ENCODE measurements at regions of chr6 and their contacts with region 1.

Region 1: DNA sequence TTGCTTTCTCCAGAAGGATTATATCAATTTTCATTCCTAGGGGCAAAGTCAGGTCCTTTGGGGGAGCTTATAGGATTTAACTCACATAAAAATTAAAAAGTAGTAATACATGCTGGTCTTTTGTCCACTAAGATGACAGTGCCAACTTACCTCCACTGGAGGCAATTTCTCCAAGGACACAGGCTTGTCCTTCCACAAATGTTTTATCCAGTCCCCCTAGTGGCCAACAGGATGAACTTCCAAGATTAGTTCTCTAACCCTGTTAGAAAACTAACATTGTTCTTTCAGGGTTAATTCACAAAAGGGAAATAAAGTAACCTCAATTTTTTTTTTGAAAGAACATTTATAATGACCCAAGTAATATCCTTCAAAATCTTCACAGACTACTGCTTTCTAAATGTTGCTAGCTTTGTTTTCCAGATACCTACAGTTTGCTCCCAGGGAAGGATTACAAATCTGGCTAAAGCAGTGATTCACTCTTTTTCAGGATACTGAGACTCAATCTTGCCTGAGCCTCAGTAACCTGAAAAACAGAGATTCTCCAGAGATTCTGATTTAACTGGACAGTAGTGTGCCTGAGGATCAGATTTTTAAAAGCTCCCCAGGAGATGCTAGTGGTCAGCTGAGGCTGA is 31.7 kb upstream of the UBR2 start:
- DNase-seq: peak in 4 of 9 experiments; percentile 14 to 72 (median 36)
- ATAC-seq: no peak
- H3K4me3 ChIP-seq: no peak overlapping the region
- H3K4me3 Mint-ChIP-seq: no peak overlapping the region
- H3K27ac ChIP-seq: no peak overlapping the region
- H3K27ac Mint-ChIP-seq: no peak overlapping the region
- H3K4me1 ChIP-seq: no peaks in the 10 kb centered on the region
- H3K4me1 Mint-ChIP-seq: no peaks in the 10 kb centered on the region
- H3K27me3 ChIP-seq: no peaks in the 10 kb centered on the region
- H3K27me3 Mint-ChIP-seq: no peaks in the 10 kb centered on the region
- CTCF ChIP-seq: peak; percentile 80

Region 2: DNA sequence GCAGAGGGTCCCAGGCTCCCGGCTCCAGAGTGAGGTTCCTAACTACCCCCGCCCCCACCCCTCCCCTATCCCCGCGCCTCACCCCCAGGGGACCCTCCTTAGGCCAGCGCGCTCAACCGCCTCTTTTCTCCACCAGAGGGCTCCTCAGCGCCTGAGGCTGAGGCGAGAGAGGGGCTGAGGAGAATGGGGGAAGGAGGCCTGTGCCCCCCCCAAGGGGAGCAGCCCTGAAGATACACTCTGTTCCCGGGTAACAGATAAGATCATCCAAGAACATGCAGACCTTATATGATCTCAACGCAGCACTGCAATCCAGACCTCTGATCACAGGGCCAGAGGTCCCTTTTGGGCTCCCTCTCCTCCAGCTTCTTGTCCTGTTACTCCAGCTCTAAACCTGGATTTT is 271.2 kb before region 1 on chr6:
- CTCF ChIA-PET with region 1: interaction called, 19 read pairs
- POLR2A ChIA-PET with region 1: no interaction called
- intact Hi-C with region 1: loop called (anchors 1 kb)
- DNase-seq: peak in 6 of 9 experiments; percentile 35 to 70 (median 53)
- ATAC-seq: peak; percentile 81
- H3K4me3 ChIP-seq: no peak overlapping the region
- H3K4me3 Mint-ChIP-seq: no peak overlapping the region
- H3K27ac ChIP-seq: no peak overlapping the region
- H3K27ac Mint-ChIP-seq: peak overlapping the region; percentile 45
- H3K4me1 ChIP-seq: peaks cover 3% of the 10 kb centered on the region
- H3K4me1 Mint-ChIP-seq: peaks cover 12% of the 10 kb centered on the region
- H3K27me3 ChIP-seq: no peaks in the 10 kb centered on the region
- H3K27me3 Mint-ChIP-seq: no peaks in the 10 kb centered on the region
- CTCF ChIP-seq: peak; percentile 49

Region 3: DNA sequence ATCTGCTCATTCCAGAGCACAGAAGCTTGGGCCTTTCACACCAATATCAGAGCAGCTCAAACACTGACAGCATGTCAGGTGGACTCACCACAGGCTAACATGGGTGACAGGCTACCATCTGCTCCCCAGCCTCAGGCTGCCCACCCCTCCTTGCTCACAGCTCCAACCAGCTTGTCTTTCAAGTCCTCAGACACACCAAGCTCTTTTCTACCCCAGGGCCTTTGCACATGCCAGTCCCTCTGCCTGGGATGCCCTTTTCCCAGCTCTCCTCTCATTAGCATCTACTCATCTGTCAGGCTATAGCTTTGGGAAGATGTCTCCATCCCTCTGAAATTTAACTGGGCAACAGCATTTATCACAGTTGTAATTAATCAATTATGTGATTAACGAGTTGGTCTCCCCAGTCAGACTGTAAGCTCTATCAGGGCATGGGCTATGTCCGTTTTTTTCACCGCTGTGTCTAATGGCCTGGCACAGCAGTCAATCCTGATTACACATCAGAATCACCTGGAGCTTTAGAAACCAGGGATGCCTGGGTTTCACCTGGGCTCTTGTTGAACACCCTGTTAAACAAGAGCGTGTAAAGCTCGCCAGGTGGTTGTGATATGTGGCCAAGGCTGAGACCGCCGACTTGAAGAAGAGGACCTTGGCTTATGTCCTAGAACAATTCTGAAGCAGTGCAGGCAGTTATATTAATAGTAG is 225.6 kb before region 1 on chr6:
- CTCF ChIA-PET with region 1: interaction called, 23 read pairs
- POLR2A ChIA-PET with region 1: no interaction called
- intact Hi-C with region 1: loop called (anchors 1 to 5 kb)
- DNase-seq: no peak
- ATAC-seq: no peak
- H3K4me3 ChIP-seq: no peak overlapping the region
- H3K4me3 Mint-ChIP-seq: no peak overlapping the region
- H3K27ac ChIP-seq: no peak overlapping the region
- H3K27ac Mint-ChIP-seq: no peak overlapping the region
- H3K4me1 ChIP-seq: no peaks in the 10 kb centered on the region
- H3K4me1 Mint-ChIP-seq: peaks cover 45% of the 10 kb centered on the region
- H3K27me3 ChIP-seq: no peaks in the 10 kb centered on the region
- H3K27me3 Mint-ChIP-seq: no peaks in the 10 kb centered on the region
- CTCF ChIP-seq: no peak

Region 4: DNA sequence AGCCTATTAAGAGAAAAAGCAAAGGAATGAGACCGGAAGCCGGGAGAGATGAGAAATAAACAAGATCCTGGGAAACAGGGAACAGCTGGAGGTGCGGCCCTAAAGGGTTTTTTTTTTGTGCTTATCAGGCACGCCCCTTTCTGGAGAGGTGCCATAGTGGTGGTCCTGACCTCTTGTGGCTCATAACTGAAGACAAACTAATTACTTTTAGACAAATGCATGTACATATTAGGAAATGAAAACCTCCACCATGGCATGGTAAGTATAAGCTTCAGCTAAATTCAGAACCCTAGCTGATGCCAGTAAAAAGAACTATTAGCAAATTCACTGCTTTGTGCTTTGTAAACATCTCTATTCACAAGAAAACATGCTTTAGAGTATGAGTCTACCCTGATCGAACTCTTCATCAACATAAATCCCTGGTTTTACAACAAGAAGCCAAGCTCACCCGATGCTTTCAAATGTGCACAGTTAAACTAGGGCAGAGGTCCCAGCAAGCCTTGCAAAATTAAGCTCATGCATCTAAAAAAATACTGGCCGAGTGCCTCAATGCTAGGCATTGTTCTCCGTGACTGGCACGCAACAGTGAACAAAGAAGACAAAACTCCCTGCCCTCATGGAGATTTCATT is 218.1 kb before region 1 on chr6:
- CTCF ChIA-PET with region 1: interaction called, 23 read pairs
- POLR2A ChIA-PET with region 1: no interaction called
- intact Hi-C with region 1: loop called (anchors 1 to 5 kb)
- DNase-seq: peak in 1 of 9 experiments; percentile 41
- ATAC-seq: no peak
- H3K4me3 ChIP-seq: no peak overlapping the region
- H3K4me3 Mint-ChIP-seq: no peak overlapping the region
- H3K27ac ChIP-seq: peak overlapping the region in 1 of 2 experiments; percentile 10
- H3K27ac Mint-ChIP-seq: peak overlapping the region; percentile 68
- H3K4me1 ChIP-seq: peaks cover 15% of the 10 kb centered on the region
- H3K4me1 Mint-ChIP-seq: peaks cover 50% of the 10 kb centered on the region
- H3K27me3 ChIP-seq: no peaks in the 10 kb centered on the region
- H3K27me3 Mint-ChIP-seq: no peaks in the 10 kb centered on the region
- CTCF ChIP-seq: no peak

Region 5: DNA sequence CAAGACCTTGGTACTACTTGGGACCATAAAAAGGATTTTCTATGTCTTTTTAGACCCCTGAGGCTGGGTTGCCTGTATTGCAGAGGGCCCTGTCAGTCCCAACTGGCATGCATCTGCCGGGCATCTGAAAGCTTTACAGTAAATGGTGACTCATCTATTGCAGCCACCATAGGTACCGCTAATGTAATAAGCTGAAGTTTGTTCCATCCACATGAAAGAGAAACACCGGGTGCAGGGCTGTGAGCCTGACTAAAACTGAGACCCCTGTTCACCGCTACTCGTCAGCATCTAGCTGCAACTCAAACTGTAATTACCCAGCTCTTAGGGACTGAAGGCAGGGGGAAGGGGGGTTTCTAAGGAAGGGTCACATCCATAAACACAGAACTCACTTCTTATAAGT is 130.0 kb before region 1 on chr6:
- CTCF ChIA-PET with region 1: interaction called, 10 read pairs
- POLR2A ChIA-PET with region 1: no interaction called
- intact Hi-C with region 1: loop called in 1 of 2 experiments (anchors 5 kb)
- DNase-seq: peak in 6 of 9 experiments; percentile 34 to 65 (median 46)
- ATAC-seq: peak; percentile 75
- H3K4me3 ChIP-seq: no peak overlapping the region
- H3K4me3 Mint-ChIP-seq: peak overlapping the region; percentile 2
- H3K27ac ChIP-seq: peak overlapping the region in 1 of 2 experiments; percentile 59
- H3K27ac Mint-ChIP-seq: peak overlapping the region; percentile 67
- H3K4me1 ChIP-seq: peaks cover 54% of the 10 kb centered on the region
- H3K4me1 Mint-ChIP-seq: peaks cover 86% of the 10 kb centered on the region
- H3K27me3 ChIP-seq: no peaks in the 10 kb centered on the region
- H3K27me3 Mint-ChIP-seq: no peaks in the 10 kb centered on the region
- CTCF ChIP-seq: no peak

Region 6: GRCh38 chr6:42520786-42521607 is 11.2 kb before region 1 on chr6:
- CTCF ChIA-PET with region 1: interaction called, 14 read pairs
- POLR2A ChIA-PET with region 1: no interaction called
- intact Hi-C with region 1: no loop called
- DNase-seq: peak in 1 of 9 experiments; percentile 7
- ATAC-seq: no peak
- H3K4me3 ChIP-seq: no peak overlapping the region
- H3K4me3 Mint-ChIP-seq: no peak overlapping the region
- H3K27ac ChIP-seq: no peak overlapping the region
- H3K27ac Mint-ChIP-seq: no peak overlapping the region
- H3K4me1 ChIP-seq: no peaks in the 10 kb centered on the region
- H3K4me1 Mint-ChIP-seq: no peaks in the 10 kb centered on the region
- H3K27me3 ChIP-seq: no peaks in the 10 kb centered on the region
- H3K27me3 Mint-ChIP-seq: no peaks in the 10 kb centered on the region
- CTCF ChIP-seq: no peak

Region 7: GRCh38 chr6:43113431-43114260 is 581.5 kb after region 1 on chr6:
- CTCF ChIA-PET with region 1: no interaction called
- POLR2A ChIA-PET with region 1: no interaction called
- intact Hi-C with region 1: no loop called
- DNase-seq: no peak
- ATAC-seq: no peak
- H3K4me3 ChIP-seq: no peak overlapping the region
- H3K4me3 Mint-ChIP-seq: no peak overlapping the region
- H3K27ac ChIP-seq: no peak overlapping the region
- H3K27ac Mint-ChIP-seq: no peak overlapping the region
- H3K4me1 ChIP-seq: no peaks in the 10 kb centered on the region
- H3K4me1 Mint-ChIP-seq: no peaks in the 10 kb centered on the region
- H3K27me3 ChIP-seq: no peaks in the 10 kb centered on the region
- H3K27me3 Mint-ChIP-seq: no peaks in the 10 kb centered on the region
- CTCF ChIP-seq: no peak

Region 8: DNA sequence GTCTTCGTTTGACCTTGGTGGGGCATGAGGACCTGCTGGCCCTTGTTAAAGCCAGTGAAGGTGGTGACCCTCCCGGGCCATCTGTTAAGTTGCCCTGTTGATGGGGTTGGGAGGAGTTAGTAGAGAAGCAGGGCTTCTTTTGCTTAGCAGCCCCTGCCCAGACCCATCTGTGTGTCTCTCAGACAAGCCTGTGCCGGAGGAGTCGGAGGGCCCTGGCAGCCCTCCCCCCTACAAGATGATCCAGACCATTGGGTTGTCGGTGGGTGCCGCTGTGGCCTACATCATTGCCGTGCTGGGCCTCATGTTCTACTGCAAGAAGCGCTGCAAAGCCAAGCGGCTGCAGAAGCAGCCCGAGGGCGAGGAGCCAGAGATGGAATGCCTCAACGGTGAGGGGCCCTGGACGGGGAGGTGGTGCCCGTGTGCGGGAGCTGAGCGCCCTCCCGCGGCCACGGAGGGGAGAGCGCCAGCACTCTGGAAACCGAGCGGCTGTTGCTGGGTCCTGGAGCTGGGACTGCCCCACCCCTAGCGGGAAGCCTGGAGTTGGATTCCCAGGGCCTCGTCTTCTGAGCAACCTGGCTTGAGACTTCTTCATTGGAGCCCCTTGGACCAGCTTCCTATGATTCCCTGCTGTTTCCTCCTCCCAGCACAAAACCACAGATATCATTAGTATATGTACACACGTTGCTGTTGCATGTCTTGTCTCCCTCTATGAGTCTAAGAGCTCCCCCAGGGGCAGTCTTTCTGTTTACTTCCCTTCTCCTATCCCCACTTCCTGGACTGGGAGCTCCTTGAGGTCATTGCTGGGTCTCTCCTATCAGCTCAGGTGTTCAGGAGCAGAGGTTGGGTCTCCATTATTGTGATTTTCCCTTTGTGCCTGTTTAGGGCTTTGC is 611.3 kb after region 1 on chr6:
- CTCF ChIA-PET with region 1: no interaction called
- POLR2A ChIA-PET with region 1: no interaction called
- intact Hi-C with region 1: no loop called
- DNase-seq: peak; percentile 64 to 90 (median 79)
- ATAC-seq: peak; percentile 74
- H3K4me3 ChIP-seq: peak overlapping the region; percentile 40 to 48
- H3K4me3 Mint-ChIP-seq: peak overlapping the region; percentile 87
- H3K27ac ChIP-seq: peak overlapping the region; percentile 67 to 73
- H3K27ac Mint-ChIP-seq: peak overlapping the region; percentile 99
- H3K4me1 ChIP-seq: peaks cover 30% of the 10 kb centered on the region
- H3K4me1 Mint-ChIP-seq: peaks cover 32% of the 10 kb centered on the region
- H3K27me3 ChIP-seq: no peaks in the 10 kb centered on the region
- H3K27me3 Mint-ChIP-seq: no peaks in the 10 kb centered on the region
- CTCF ChIP-seq: peak; percentile 80

Region 9: GRCh38 chr6:43402820-43403219 is 870.7 kb after region 1 on chr6:
- CTCF ChIA-PET with region 1: no interaction called
- POLR2A ChIA-PET with region 1: no interaction called
- intact Hi-C with region 1: no loop called
- DNase-seq: no peak
- ATAC-seq: no peak
- H3K4me3 ChIP-seq: no peak overlapping the region
- H3K4me3 Mint-ChIP-seq: no peak overlapping the region
- H3K27ac ChIP-seq: no peak overlapping the region
- H3K27ac Mint-ChIP-seq: no peak overlapping the region
- H3K4me1 ChIP-seq: peaks cover 2% of the 10 kb centered on the region
- H3K4me1 Mint-ChIP-seq: peaks cover 3% of the 10 kb centered on the region
- H3K27me3 ChIP-seq: peaks cover 0 to 3% of the 10 kb centered on the region in 2 experiments
- H3K27me3 Mint-ChIP-seq: peaks cover 23% of the 10 kb centered on the region
- CTCF ChIP-seq: no peak